CD4-positive, alpha-beta memory T cell (primary cell): ENCODE measurements at regions of chr1 and their contacts with region 1.

Region 1: DNA sequence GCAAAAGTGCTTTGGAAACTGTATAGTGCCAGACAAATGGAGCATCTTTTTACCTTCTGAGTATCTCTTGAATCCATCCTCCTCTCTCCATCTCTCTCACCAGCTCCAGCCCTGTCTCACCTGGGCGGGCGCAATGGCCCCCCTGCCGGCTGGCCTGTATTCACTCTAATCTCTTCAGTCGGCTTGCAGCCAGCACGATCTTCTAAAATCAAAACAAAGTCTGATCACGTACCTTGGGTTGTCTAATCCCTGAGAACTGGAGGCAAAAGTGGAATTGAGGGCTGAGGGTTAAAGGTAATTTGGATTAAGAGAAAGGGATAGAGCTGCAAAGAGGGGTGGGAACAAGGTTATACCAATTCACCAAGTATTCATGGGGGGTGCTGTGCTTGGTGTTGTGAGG is 46.0 kb upstream of the LRRN2 start:
- DNase-seq: no peak
- H3K4me3 ChIP-seq: no peak overlapping the region
- H3K4me3 Mint-ChIP-seq: no peak overlapping the region
- H3K27ac ChIP-seq: no peak overlapping the region
- H3K27ac Mint-ChIP-seq: no peak overlapping the region
- H3K4me1 ChIP-seq: no peaks in the 10 kb centered on the region
- H3K4me1 Mint-ChIP-seq: no peaks in the 10 kb centered on the region
- H3K27me3 ChIP-seq: no peaks in the 10 kb centered on the region
- H3K27me3 Mint-ChIP-seq: peaks cover 1 to 19% of the 10 kb centered on the region in 2 donors

Region 2: DNA sequence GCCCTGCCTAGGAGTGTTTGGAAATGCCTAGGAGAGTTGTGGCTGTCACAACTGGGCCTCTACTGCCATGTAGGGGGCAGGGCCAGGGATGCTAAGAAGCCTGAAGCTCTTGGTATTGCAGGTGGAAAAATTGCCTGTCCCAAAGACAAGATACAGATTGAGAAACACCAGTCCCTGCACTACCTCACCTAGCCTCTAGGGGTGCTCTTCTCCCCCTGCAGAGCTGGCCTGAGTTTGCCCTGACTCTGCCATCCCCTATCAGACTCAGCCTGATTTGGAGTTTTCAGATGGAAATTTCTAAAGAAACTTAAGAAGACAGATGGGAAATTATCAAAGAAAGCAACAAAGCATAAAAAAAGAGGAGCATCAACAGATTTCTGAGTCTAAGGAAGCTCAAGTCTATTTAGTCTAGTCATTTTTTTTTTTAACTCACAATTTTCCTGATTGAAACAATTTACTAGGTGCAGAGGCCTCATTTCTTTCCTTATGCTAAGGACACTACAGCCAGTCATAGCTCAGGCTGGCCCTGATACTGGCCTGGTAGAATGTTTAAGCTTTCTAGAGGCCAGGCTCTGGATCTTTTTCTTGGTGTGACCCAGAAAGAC is 15.4 kb after region 1 on chr1:
- CTCF ChIA-PET with region 1: interaction called, 17 read pairs
- POLR2A ChIA-PET with region 1: interaction called, 3 read pairs
- intact Hi-C with region 1: no loop called
- DNase-seq: peak in 4 of 5 donors; percentile 38 to 48 (median 45)
- H3K4me3 ChIP-seq: no peak overlapping the region
- H3K4me3 Mint-ChIP-seq: no peak overlapping the region
- H3K27ac ChIP-seq: no peak overlapping the region
- H3K27ac Mint-ChIP-seq: no peak overlapping the region
- H3K4me1 ChIP-seq: no peaks in the 10 kb centered on the region
- H3K4me1 Mint-ChIP-seq: no peaks in the 10 kb centered on the region
- H3K27me3 ChIP-seq: peaks cover 4% of the 10 kb centered on the region
- H3K27me3 Mint-ChIP-seq: peaks cover 15 to 23% of the 10 kb centered on the region in 2 donors

Region 3: DNA sequence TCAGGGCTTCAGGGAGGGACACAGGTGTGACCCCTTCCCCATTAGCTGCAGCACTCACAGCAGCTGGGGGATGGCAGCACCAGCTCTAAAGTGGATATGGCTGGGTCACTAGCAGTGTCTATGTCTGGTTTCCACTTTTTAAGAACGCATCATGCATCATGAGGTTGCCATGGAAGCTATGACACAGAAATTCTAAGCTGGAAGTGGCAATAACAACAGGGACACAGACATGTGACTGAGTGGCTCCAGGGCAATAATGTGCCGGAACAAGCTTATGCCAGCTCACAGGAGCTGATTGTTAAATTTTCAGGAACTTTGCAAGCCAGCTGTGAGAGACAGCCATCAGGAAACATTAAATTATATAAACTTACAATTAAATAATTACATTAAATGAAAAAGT is 88.0 kb after region 1 on chr1:
- CTCF ChIA-PET with region 1: no interaction called
- POLR2A ChIA-PET with region 1: no interaction called
- intact Hi-C with region 1: no loop called
- DNase-seq: no peak
- H3K4me3 ChIP-seq: no peak overlapping the region
- H3K4me3 Mint-ChIP-seq: no peak overlapping the region
- H3K27ac ChIP-seq: no peak overlapping the region
- H3K27ac Mint-ChIP-seq: no peak overlapping the region
- H3K4me1 ChIP-seq: no peaks in the 10 kb centered on the region
- H3K4me1 Mint-ChIP-seq: no peaks in the 10 kb centered on the region
- H3K27me3 ChIP-seq: no peaks in the 10 kb centered on the region
- H3K27me3 Mint-ChIP-seq: peaks cover 13 to 26% of the 10 kb centered on the region in 2 donors